ENCODE measurements at regions of chr10 and their contacts with region 1.

Region 1: GRCh38 chr10:79929409-79929904 is 19.4 kb downstream of the SFTPD start:
- DNase-seq: peak in 1 of 2 experiments; percentile 66
- H3K4me3 ChIP-seq: no peak overlapping the region
- H3K27ac ChIP-seq: no peak overlapping the region
- H3K4me1 ChIP-seq: no peaks in the 10 kb centered on the region
- H3K27me3 ChIP-seq: peaks cover 8% of the 10 kb centered on the region; the same call in 1 of the 2 replicates
- CTCF ChIP-seq: peak; percentile 89

Region 2: DNA sequence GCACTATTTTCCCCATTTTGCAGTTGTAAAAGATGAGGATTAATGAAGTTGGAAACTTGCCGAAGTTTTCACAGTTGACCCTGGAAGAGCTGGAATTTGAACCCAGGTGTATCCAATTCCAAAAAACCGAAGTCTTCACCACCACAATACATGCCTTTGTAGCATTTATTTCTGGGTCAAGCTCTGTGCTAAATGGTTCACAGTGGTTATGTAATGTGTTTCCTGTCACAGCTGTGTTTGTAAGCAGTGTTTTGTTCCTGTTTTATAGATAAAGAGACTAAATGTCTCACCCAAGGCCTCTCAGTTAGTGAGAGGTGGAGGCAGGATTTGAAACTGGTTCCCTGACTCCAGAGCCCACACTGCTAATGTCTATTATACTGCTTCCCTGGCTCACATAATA is 386.8 kb before region 1 on chr10:
- CTCF ChIA-PET with region 1: no interaction called
- POLR2A ChIA-PET with region 1: no interaction called
- intact Hi-C with region 1: loop called (anchors 1 kb)
- DNase-seq: no peak
- H3K4me3 ChIP-seq: no peak overlapping the region
- H3K27ac ChIP-seq: no peak overlapping the region
- H3K4me1 ChIP-seq: no peaks in the 10 kb centered on the region
- H3K27me3 ChIP-seq: peaks cover 25% of the 10 kb centered on the region
- CTCF ChIP-seq: no peak

Region 3: DNA sequence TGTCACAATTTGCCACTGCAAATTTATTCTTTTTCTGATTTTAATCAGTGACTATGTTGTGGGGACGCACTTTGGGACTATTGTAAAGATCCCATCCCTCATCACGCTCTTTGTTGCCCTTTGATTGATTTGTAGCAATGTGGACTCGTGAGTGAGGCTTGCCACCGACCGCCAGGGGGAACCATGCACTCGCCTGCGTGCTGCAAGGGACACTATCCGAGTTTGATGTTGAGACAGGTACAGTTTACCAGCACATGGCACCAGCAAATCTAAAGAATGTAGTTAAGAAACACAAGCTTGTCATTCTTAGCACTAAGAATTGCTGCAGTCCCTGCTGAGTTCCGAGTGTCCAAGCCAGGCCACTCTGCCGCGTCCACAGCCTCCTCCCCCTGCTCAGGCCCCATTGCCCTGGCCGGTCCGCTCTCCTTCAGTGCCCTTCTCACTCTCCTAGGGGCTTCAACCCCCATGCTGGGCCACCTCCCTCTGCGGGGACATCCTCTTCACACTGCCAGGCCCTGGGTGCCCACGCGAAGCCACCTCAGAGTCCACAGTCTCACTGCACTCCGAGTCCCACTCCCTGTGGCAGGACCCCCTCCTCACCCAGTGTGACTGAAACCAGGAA is 367.2 kb before region 1 on chr10:
- CTCF ChIA-PET with region 1: no interaction called
- POLR2A ChIA-PET with region 1: no interaction called
- intact Hi-C with region 1: loop called (anchors 1 kb)
- DNase-seq: peak; percentile 59 to 66
- H3K4me3 ChIP-seq: no peak overlapping the region
- H3K27ac ChIP-seq: no peak overlapping the region
- H3K4me1 ChIP-seq: peaks cover 8% of the 10 kb centered on the region
- H3K27me3 ChIP-seq: peaks cover 38% of the 10 kb centered on the region
- CTCF ChIP-seq: peak; percentile 92

Region 4: DNA sequence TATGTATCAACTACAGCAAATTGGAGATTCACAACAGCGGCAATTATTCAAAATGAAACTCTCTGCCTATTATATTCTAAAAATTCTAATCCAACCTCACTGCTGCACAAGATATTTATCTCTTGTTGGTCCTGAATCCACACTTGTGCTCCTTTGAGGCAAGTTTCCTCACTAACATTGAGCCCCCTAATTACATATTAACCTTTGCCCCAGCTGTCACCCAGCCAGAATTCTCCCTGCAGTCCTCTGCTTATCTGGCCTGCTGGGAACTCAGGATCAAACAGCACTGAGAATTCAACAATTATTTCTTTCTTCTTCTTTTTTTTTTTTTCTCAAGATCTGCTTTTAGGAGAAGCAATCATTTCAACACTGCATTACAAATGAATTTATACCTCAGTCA is 181.5 kb after region 1 on chr10:
- CTCF ChIA-PET with region 1: no interaction called
- POLR2A ChIA-PET with region 1: no interaction called
- intact Hi-C with region 1: no loop called
- DNase-seq: no peak
- H3K4me3 ChIP-seq: no peak overlapping the region
- H3K27ac ChIP-seq: no peak overlapping the region
- H3K4me1 ChIP-seq: 0 out of 2 replicates have a peak, but pooled peaks cover 6% of the 10 kb centered on the region
- H3K27me3 ChIP-seq: no peaks in the 10 kb centered on the region
- CTCF ChIP-seq: no peak

Region 5: GRCh38 chr10:80277522-80278250 is 348.2 kb after region 1 on chr10:
- CTCF ChIA-PET with region 1: interaction called, 26 read pairs
- POLR2A ChIA-PET with region 1: no interaction called
- intact Hi-C with region 1: no loop called
- DNase-seq: no peak
- H3K4me3 ChIP-seq: no peak overlapping the region
- H3K27ac ChIP-seq: no peak overlapping the region
- H3K4me1 ChIP-seq: peaks cover 5% of the 10 kb centered on the region
- H3K27me3 ChIP-seq: peaks cover 3% of the 10 kb centered on the region; the same call in 1 of the 2 replicates
- CTCF ChIP-seq: no peak

Measured in PC-9 (cell line).